ENCODE measurements at regions of chr7 and their contacts with region 1.

Region 1: DNA sequence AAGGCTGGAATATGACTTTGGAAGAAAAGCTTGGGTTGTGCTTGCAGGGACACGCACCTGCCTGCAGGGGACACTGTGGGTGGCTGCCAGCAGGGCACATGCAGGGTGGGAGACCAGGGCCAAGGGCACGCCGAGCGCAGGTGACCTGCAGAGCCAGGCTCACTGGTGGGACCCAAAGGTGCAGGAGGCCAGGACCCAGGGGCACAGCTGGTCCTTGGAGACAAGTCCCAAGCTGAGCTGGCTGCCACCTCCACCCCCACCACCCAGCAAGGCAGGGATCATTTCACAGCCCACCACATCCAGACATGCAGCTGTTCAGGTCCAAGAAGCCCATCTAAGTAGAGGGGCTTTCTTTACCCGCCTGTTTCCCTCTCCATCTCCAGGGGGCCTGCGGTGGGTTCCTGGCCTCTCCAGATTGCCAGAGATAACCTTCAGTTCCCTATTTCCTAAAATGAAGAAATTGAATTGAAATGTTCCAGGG is 13.8 kb upstream of the CLIP2 start:
- DNase-seq: no peak
- H3K4me3 Mint-ChIP-seq: no peak overlapping the region
- H3K27ac Mint-ChIP-seq: no peak overlapping the region
- H3K4me1 Mint-ChIP-seq: peaks cover 14% of the 10 kb centered on the region
- H3K27me3 Mint-ChIP-seq: peaks cover 38% of the 10 kb centered on the region

Region 2: DNA sequence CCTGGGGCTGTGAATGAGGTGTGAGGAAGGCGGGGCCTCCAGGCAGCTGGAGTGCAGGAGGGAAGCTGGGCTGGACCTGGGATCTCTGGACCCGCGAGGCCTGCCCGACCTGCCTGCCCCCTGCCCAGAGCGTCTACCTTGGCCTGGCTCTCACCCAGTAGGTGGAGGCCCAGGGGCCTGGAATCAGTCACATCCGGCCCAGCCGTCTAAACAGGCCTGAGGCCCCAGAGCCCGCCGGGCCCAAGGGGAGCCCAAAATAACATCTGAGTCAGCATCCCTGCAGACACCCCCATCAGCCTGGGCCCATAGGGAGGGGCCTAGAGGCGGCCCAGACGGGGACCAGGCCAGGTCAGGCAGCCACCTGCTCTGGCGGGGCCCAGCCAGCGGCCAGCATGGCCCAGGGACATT is 262.6 kb before region 1 on chr7:
- CTCF ChIA-PET with region 1: no interaction called
- DNase-seq: no peak
- H3K4me3 Mint-ChIP-seq: no peak overlapping the region
- H3K27ac Mint-ChIP-seq: no peak overlapping the region
- H3K4me1 Mint-ChIP-seq: no peaks in the 10 kb centered on the region
- H3K27me3 Mint-ChIP-seq: peaks cover 9% of the 10 kb centered on the region

Region 3: GRCh38 chr7:74289018-74289658 is 13.7 kb after region 1 on chr7 and contains the start of gene CLIP2:
- CTCF ChIA-PET with region 1: interaction called, 13 read pairs
- DNase-seq: peak; percentile 79
- H3K4me3 Mint-ChIP-seq: peak within 1 kb of the TSS; percentile 76
- H3K27ac Mint-ChIP-seq: peak within 1 kb of the TSS; percentile 69
- H3K4me1 Mint-ChIP-seq: peaks cover 19% of the 10 kb centered on the region
- H3K27me3 Mint-ChIP-seq: peaks cover 83% of the 10 kb centered on the region